Posterior vena cava (tissue), 2 donors: ENCODE measurements at regions of chr21 and their contacts with region 1.

Region 1: GRCh38 chr21:26769613-26770188 is 75.5 kb downstream of the ADAMTS1 start:
- DNase-seq: no peak

Region 2: DNA sequence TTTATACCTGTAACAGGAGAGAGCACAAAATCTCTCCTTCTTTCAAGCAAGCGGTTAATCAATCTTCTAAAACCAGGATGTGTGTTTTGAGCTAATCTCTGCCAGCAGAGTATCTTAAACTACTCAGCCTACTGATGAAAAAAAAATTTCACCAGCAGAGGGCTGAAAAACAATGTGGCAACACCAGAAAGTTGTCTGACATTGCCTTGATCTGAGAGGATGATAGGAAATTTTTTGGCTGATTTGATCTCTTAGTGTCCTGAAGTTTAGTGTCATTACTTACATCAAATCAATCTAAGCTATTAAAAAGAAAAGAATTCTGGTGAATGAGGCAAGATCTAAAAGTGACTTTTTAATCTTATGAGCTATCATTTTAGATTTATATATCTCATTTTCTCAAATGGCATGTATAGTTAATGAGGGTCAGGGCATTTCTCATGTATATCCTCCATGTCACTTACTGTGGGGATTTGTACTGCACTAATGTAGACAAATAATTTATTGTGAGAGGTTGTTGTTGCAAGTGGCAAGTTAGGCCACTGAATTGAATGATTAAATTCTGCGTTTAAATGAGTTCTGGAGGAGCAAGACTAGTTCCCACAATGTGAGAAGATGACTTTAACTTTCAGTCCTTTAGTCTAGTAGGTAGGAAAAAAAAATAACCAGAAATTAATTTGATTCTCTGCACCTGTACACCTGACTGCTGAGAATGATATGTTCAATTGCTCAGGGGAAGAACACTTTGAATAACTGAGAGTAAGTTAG is 64.7 kb after region 1 on chr21:
- intact Hi-C with region 1: loop called in 1 of 2 experiments (anchors 10 kb)
- DNase-seq: no peak